ENCODE measurements at regions of chr7 and their contacts with region 1.

Region 1: DNA sequence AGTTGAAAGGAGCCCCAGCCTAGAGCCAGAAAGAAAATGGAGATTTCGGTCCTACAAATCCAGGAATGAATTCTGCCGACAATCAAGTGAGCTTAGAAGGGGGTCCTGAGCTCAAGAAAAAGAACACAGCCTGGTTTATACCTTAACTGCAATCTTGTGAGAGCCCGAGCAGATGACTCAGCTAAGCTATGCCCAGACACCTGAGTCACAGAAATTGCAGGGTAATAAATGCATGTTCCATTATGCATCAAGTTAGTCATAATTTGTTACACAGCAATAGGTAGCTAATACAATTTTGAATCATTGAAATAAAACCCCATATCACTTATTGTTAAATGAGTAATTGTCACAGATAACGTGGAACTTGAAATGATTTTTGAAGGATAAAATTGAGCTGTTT is 111.8 kb upstream of the FOXP2 start:
- DNase-seq: no peak
- ATAC-seq: no peak
- H3K4me3 ChIP-seq: no peak overlapping the region
- H3K4me3 Mint-ChIP-seq: no peak overlapping the region
- H3K27ac ChIP-seq: no peak overlapping the region
- H3K27ac Mint-ChIP-seq: no peak overlapping the region
- H3K4me1 ChIP-seq: no peaks in the 10 kb centered on the region
- H3K4me1 Mint-ChIP-seq: no peaks in the 10 kb centered on the region
- H3K27me3 ChIP-seq: no peaks in the 10 kb centered on the region
- H3K27me3 Mint-ChIP-seq: no peaks in the 10 kb centered on the region
- CTCF ChIP-seq: no peak

Region 2: GRCh38 chr7:114502454-114503254 is 199.8 kb after region 1 on chr7:
- CTCF ChIA-PET with region 1: no interaction called
- POLR2A ChIA-PET with region 1: no interaction called
- intact Hi-C with region 1: loop called in 1 of 2 experiments (anchors 10 kb)
- DNase-seq: no peak
- ATAC-seq: no peak
- H3K4me3 ChIP-seq: no peak overlapping the region
- H3K4me3 Mint-ChIP-seq: no peak overlapping the region
- H3K27ac ChIP-seq: no peak overlapping the region
- H3K27ac Mint-ChIP-seq: no peak overlapping the region
- H3K4me1 ChIP-seq: no peaks in the 10 kb centered on the region
- H3K4me1 Mint-ChIP-seq: no peaks in the 10 kb centered on the region
- H3K27me3 ChIP-seq: no peaks in the 10 kb centered on the region
- H3K27me3 Mint-ChIP-seq: no peaks in the 10 kb centered on the region
- CTCF ChIP-seq: no peak

Measured in CD8-positive, alpha-beta T cell (primary cell).